Ovary (tissue), 10 donors: ENCODE measurements at regions of chr7 and their contacts with region 1.

Region 1: GRCh38 chr7:109158246-109158645 is 588.6 kb downstream of the DNAJB9 start:
- DNase-seq: no peak
- H3K4me3 ChIP-seq: no peak overlapping the region
- H3K27ac ChIP-seq: no peak overlapping the region
- H3K4me1 ChIP-seq: no peaks in the 10 kb centered on the region
- H3K27me3 ChIP-seq: no peaks in the 10 kb centered on the region
- CTCF ChIP-seq: no peak
- EP300 ChIP-seq: no peak
- POLR2A ChIP-seq: no peak

Region 2: GRCh38 chr7:109503421-109503820 is 345.2 kb after region 1 on chr7:
- intact Hi-C with region 1: loop called in 1 of 4 experiments (anchors 5 kb)
- DNase-seq: no peak
- H3K4me3 ChIP-seq: no peak overlapping the region
- H3K27ac ChIP-seq: no peak overlapping the region
- H3K4me1 ChIP-seq: no peaks in the 10 kb centered on the region
- H3K27me3 ChIP-seq: no peaks in the 10 kb centered on the region
- CTCF ChIP-seq: no peak
- EP300 ChIP-seq: no peak
- POLR2A ChIP-seq: no peak

Region 3: DNA sequence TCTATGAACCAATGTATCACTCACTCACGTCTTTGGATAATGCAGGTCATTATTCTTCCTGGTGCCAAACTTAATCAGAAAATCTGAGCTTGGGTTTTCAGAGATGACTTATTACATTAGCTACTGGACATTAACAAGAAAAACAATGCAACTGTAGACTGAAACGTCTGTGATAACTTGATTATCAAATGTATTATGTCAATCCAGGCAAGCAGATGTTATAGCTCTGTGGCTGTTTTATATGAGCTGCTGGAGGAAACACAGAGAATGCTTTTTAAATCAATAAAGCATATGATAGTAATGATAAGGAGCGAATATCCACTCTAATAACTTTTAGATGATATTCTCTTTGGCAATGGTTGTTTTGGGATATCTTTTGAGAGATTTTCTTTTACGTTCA is 535.9 kb after region 1 on chr7:
- intact Hi-C with region 1: no loop called
- DNase-seq: no peak
- H3K4me3 ChIP-seq: no peak overlapping the region
- H3K27ac ChIP-seq: no peak overlapping the region
- H3K4me1 ChIP-seq: no peaks in the 10 kb centered on the region
- H3K27me3 ChIP-seq: no peaks in the 10 kb centered on the region
- CTCF ChIP-seq: no peak
- EP300 ChIP-seq: no peak
- POLR2A ChIP-seq: no peak